K562 (cell line): ENCODE measurements at regions of chr5 and their contacts with region 1.

Region 1: DNA sequence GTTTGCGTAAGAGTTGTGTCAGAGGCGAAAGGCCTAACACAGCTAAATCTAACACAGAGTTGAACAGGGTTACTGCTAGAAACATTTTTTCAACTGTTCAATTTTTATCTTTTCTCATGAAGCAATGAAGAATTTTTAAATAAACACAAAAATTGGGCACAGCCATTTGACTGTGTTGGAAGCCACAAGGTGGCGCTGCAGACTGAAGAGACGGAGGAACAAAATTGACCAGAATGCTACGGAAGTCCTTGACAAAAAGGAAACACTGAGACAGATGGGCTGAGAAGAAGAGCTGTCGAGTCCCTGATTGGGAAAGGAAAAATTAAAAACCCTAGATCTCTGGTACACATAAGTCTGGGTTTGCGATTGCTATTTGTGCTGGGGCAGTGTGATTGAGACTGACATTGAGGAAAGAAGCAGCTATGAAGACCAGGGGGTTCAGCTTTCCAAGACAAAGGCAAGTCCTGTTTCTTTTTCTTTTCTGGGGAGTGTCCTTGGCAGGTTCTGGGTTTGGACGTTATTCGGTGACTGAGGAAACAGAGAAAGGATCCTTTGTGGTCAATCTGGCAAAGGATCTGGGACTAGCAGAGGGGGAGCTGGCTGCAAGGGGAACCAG is at the start of gene PCDHB9:
- DNase-seq: peak; percentile 13 to 37 (median 17)
- ATAC-seq: peak; percentile 61; the same call in 2 of the 3 replicates
- H3K4me3 ChIP-seq: no peak within 1 kb of the TSS
- H3K27ac ChIP-seq: no peak within 1 kb of the TSS
- H3K4me1 ChIP-seq: no peaks in the 10 kb centered on the region
- H3K27me3 ChIP-seq: no peaks in the 10 kb centered on the region; a peak in 1 of 5 replicates
- CTCF ChIP-seq: peak; percentile 48 to 62 (median 62); a peak in 5 of 6 replicates
- EP300 ChIP-seq: no peak
- POLR2A ChIP-seq: no peak
- RAD21 ChIP-seq: 0 out of 4 replicates have a peak, but pooled peaks of 1 of the 2 experiments have one; percentile 11
- polyA plus RNA-seq, gene PCDHB9: not detected

Region 2: GRCh38 chr5:141175933-141176332 is 11.1 kb before region 1 on chr5:
- CTCF ChIA-PET with region 1: no interaction called
- POLR2A ChIA-PET with region 1: no interaction called
- in situ Hi-C with region 1: no loop called
- intact Hi-C with region 1: loop called (anchors 1 kb)
- DNase-seq: no peak
- ATAC-seq: no peak
- H3K4me3 ChIP-seq: no peak overlapping the region
- H3K27ac ChIP-seq: no peak overlapping the region
- H3K4me1 ChIP-seq: no peaks in the 10 kb centered on the region
- H3K27me3 ChIP-seq: peaks cover 8 to 19% of the 10 kb centered on the region in 2 experiments; a peak in 3 of 5 replicates
- CTCF ChIP-seq: no peak
- EP300 ChIP-seq: no peak
- POLR2A ChIP-seq: no peak
- RAD21 ChIP-seq: no peak